ENCODE measurements at regions of chr13 and their contacts with region 1.

Region 1: GRCh38 chr13:48532506-48533499 is at the start of gene RCBTB2:
- DNase-seq: peak; percentile 99 to 100 (median 99)
- H3K4me3 ChIP-seq: peak within 1 kb of the TSS; percentile 89
- H3K27ac ChIP-seq: peak within 1 kb of the TSS; percentile 92 to 94
- H3K4me1 ChIP-seq: no peaks in the 10 kb centered on the region
- H3K27me3 ChIP-seq: no peaks in the 10 kb centered on the region
- CTCF ChIP-seq: peak in 1 of 3 donors; percentile 14
- EP300 ChIP-seq: no peak
- POLR2A ChIP-seq: peak; percentile 85
- total RNA-seq, gene RCBTB2: 8.2 to 22.6 (median 13.9) TPM

Region 2: DNA sequence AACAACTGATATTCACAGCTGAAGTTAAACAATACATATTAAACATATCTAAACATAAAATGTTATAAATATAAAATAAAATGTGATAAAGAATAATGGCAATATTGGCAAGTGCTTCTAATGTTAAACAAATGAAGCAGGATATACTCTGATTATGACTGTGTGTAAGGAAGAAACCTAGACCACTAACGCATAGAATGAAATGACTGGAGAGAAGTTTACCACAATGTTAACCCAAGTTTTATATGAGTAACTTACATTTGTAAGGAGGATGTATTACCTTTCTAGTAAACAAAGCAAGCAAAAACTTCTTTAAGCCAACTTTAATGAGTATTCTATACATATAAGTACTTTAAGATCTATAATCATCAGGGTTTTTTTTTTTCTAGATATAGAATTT is 186.2 kb before region 1 on chr13:
- intact Hi-C with region 1: no loop called
- DNase-seq: no peak
- H3K4me3 ChIP-seq: no peak overlapping the region
- H3K27ac ChIP-seq: no peak overlapping the region
- H3K4me1 ChIP-seq: no peaks in the 10 kb centered on the region
- H3K27me3 ChIP-seq: no peaks in the 10 kb centered on the region
- CTCF ChIP-seq: no peak
- EP300 ChIP-seq: no peak
- POLR2A ChIP-seq: no peak

Region 3: DNA sequence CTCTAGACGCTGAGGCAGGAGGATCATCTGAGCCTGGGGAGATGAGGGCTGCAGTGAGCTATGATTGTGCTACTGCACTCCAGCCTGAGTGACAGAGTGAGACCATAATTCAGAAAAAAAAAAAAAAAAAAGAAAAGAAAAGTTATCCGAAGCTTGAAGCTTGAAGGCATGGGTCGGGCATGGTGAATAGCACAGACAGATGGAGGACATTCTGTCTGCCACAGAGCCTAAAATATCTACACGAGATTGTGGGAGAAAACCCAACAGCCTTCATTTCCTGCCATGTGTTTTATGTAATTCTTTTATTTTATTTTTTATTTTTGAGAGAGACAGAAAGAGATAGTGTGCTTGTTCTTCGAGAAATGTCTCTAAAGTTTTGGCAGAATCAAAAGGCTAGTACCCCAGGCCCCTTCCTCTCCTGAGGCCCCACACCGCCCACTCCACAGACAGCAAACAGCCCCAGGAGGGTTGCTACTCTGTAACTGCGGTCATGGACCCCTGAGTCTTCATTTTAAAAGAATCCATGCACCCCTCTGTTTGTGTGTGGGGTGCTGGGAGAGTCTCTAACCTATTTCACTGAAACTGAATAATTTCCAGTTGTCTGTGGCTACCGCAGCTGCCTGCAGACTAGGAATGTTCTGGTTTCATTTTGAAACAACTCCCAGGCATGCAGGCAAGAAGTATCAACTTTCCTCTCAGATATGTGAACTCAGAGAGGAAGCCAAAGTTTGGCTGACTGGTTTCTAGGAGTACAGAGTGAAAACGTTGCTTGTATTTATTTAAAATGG is 38.5 kb after region 1 on chr13:
- intact Hi-C with region 1: loop called in 2 of 4 experiments (anchors 2 to 5 kb)
- DNase-seq: peak in 4 of 5 donors; percentile 25 to 50 (median 38)
- H3K4me3 ChIP-seq: peak overlapping the region; percentile 1
- H3K27ac ChIP-seq: peak overlapping the region; percentile 62 to 76
- H3K4me1 ChIP-seq: peaks cover 8% of the 10 kb centered on the region
- H3K27me3 ChIP-seq: no peaks in the 10 kb centered on the region
- CTCF ChIP-seq: no peak
- EP300 ChIP-seq: no peak
- POLR2A ChIP-seq: no peak